ENCODE measurements at regions of chr5 and their contacts with region 1.

Region 1: DNA sequence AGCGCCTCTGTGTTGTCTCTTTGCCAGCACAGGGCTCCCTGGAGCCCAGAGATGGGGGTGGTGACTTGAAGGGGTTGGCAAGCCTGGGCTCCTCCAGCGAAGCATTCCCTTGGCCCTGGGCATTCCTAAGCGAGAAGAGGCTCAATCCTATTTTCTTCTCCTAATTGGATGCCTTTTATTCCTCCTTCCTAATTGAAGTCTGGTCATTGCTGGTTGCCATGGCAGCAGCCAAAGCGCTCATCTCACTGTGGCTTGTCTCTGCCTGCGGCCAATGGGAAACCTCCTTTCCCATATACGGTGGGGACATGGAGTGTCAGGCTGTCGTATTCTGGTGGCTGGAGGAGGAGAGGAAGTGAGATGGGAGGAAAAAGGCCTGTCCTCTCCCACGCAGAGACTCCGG is 52.3 kb upstream of the RARS1 start:
- DNase-seq: no peak
- ATAC-seq: no peak
- H3K4me3 ChIP-seq: no peak overlapping the region
- H3K4me3 Mint-ChIP-seq: no peak overlapping the region
- H3K27ac ChIP-seq: no peak overlapping the region
- H3K27ac Mint-ChIP-seq: no peak overlapping the region
- H3K4me1 ChIP-seq: no peaks in the 10 kb centered on the region
- H3K4me1 Mint-ChIP-seq: no peaks in the 10 kb centered on the region
- H3K27me3 ChIP-seq: peaks cover 0 to 5% of the 10 kb centered on the region in 2 experiments
- H3K27me3 Mint-ChIP-seq: peaks cover 13 to 14% of the 10 kb centered on the region in 2 donors

Region 2: GRCh38 chr5:168600409-168600808 is 166.4 kb after region 1 on chr5:
- CTCF ChIA-PET with region 1: no interaction called
- POLR2A ChIA-PET with region 1: interaction called in 1 of 2 experiments, 15 read pairs
- DNase-seq: no peak
- ATAC-seq: no peak
- H3K4me3 ChIP-seq: no peak overlapping the region
- H3K4me3 Mint-ChIP-seq: no peak overlapping the region
- H3K27ac ChIP-seq: no peak overlapping the region
- H3K27ac Mint-ChIP-seq: no peak overlapping the region
- H3K4me1 ChIP-seq: no peaks in the 10 kb centered on the region
- H3K4me1 Mint-ChIP-seq: no peaks in the 10 kb centered on the region
- H3K27me3 ChIP-seq: peaks cover 0 to 6% of the 10 kb centered on the region in 2 experiments
- H3K27me3 Mint-ChIP-seq: peaks cover 20 to 22% of the 10 kb centered on the region in 2 donors